Right ventricle myocardium superior (tissue), 1 donor: ENCODE measurements at regions of chr13 and their contacts with region 1.

Region 1: DNA sequence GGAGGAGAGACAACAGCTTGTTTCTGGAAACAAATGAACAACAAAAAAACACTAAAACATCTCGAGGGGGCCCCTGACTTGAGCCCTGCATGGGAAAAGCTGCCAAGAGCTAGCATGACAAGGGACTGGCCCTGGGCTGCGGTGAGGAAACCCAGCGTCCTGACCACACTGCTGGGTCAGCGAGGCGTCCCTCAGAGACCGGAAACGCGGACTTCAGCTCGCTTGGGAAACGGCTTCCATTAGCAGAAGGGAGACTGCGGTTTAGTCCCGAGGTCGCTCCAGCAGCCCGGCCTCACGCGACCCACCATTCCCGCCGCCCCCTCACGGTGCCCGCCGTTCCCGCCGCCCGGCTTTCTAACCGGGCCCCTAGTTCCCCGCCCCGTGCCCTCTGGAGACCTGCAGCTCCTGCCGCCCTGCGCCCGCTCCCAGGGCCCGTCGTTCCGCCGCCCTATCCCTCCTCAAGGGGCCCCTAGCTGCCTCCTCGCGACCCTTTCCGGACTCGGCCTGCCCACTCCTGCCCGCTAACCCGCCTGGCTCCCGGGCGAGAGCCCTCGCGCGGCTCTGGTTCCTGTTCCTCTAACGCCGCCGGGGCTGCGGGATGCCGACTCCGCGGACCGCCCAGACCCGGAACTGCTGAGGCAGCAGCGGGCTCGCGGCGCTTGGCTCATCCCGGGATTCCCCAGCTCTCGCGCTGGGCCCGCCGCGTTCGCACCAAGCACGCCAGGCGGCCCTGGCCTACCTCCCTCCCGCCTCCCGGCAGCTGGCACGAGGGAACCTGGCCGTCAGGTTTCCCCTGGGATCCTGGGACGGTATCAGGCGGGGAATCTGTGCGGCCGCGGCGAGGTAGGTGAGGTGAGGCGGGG is at the start of gene CCDC122:
- DNase-seq: peak; percentile 92
- ATAC-seq: peak; percentile 92
- total RNA-seq, gene CCDC122: 3.4 TPM

Region 2: DNA sequence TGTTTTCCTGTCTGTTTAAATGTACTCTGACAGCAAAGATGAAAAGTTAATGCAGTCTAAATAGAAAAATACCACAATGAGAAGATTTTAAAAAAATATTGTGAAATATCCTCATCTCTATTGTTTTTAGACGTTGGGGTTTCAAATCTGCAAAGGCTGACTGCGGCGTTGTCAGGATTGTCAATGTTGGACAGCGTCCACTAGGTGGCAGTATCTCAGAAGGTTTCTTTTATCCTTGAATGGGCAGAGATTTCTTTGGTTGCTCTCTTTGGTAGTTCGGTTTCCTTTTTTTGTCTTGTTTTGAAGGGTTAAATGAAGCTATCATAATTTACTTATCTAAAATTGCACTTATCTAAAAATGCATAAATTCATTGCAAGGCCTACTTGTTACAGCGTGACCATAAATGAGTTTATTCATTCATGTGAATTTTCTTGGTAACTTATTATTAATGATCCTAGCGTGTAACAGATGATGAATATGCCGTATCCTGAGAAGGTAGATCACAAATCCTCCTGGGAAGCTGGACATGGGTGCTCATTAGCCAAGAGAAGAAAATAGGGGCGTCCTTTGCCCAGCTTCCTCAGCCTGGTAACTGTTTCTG is 1284.1 kb before region 1 on chr13:
- intact Hi-C with region 1: loop called (anchors 10 kb)
- DNase-seq: no peak
- ATAC-seq: peak; percentile 85